ENCODE measurements at regions of chr1 and their contacts with region 1.

Region 1: GRCh38 chr1:28877132-28877781 is 37.1 kb upstream of the EPB41 start:
- DNase-seq: peak; percentile 48 to 93 (median 81)

Region 2: GRCh38 chr1:28779751-28780408 is 97.4 kb before region 1 on chr1:
- intact Hi-C with region 1: loop called (anchors 1 kb)
- DNase-seq: no peak

Region 3: DNA sequence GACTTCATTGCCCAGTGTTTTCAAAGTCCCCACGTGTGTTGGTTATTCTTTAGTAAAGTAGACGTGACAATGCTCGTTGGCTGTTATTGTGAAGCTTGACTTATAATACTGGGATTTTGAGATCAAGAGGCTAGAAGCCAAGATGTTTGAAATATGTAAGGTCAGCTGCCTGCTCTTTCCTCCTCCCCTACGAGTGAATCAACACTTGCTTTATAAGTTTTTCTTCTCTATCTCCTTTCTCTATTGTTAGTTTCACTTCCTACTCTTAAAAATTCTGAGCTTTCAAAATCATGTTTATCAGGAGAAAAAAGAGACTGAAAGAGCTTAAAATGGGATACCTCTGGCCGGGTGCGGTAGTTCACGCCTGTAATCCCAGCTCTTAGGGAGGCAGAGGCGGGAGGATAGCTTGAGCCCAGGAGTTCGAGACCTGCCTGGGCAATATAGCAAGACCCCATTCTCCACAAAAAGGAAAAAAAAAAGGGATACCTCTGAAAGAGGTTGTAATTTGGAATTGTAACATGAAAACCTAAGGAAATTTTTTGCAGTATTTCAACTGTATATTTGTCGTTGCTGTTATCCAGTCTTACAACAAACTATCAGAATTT is 109.2 kb after region 1 on chr1:
- intact Hi-C with region 1: no loop called
- DNase-seq: no peak

Region 4: GRCh38 chr1:29368936-29369932 is 492.0 kb after region 1 on chr1:
- intact Hi-C with region 1: no loop called
- DNase-seq: peak in 1 of 42 donors; percentile 14

Region 5: GRCh38 chr1:29478151-29478791 is 601.0 kb after region 1 on chr1:
- intact Hi-C with region 1: no loop called
- DNase-seq: peak in 2 of 42 donors; percentile 4 to 22